ENCODE measurements at regions of chr10 and their contacts with region 1.

Region 1: DNA sequence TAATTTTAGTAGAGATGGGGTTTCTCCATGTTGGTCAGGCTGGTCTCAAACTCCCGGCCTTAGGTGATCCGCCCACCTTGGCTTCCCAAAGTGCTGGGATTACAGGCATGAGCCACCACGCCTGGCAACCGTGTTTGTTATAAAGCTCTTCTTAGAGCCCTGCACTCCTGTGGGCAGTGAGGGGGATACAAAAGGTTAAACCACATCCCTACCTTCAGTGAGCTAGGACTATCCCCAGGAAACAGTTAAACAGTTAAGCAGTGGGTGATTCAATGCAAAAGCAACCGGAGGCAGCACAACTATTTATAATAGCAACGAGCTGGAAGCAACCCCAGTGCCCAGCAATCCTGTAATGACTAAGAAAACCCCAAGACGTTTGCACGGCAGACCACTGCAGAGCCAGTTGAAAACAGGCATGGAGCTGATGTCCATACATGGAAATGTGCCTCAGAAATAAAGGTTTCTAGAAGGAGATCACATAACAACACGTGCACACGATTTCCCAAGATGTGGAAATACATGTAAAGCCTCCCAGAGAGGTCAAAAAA is 107.2 kb upstream of the LYZL2 start:
- DNase-seq: peak; percentile 41
- CTCF ChIP-seq: no peak

Region 2: DNA sequence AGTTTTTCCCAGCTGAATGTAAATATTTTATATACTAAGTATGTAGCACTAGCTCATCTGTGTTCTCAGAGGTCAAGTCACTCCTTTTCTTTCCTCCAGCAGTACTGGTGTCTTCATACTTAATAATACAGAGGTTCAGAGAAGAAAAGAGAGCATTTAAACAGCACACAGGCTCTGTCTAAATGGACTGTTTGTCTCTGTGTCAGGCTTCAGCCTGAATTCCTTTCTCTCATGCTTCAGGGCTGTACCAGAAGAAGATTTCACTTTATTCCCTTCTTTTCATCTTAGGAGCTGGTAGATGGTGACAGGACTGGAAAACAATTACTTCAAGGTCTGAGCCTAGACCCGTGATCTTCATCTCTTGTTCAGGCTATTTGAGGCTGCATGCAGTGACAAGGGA is 55.9 kb before region 1 on chr10:
- CTCF ChIA-PET with region 1: no interaction called
- POLR2A ChIA-PET with region 1: no interaction called
- DNase-seq: no peak
- CTCF ChIP-seq: no peak

Region 3: DNA sequence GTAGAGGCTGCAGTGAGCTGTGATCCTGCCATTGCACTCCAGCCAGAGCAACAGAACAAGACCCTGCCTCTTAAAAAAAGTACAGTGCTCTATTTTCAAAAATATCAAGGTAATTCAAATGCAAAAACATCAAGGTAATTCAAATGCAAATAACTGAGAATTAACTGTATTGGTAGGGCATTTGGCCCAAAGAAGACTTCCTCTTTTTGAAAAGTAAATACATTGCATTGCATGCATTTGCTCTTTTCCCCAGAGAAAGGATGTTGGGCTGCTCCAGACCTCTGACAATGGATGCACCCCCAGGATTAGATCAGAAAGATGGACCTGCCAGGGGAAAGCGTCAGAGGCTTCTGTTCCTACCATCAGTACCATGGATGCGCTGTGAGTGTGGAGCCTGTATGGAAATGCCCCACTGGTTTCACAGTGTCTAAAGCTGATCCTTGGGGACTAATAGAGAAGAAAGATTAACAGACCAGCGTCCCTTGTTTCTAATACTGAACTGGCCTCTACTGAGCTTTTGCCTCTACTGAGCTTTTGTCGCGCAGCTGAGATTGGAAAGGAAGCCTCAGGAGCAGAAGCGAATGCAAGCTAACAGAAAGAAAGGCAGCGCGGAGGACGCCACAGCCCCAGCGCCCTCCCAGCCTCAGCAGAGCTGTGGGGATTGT is 13.7 kb before region 1 on chr10:
- CTCF ChIA-PET with region 1: interaction called, 11 read pairs
- POLR2A ChIA-PET with region 1: no interaction called
- DNase-seq: no peak
- CTCF ChIP-seq: no peak

Measured in GM10248 (cell line).